Left ventricle myocardium superior (tissue), 1 donor: ENCODE measurements at regions of chr6 and their contacts with region 1.

Region 1: GRCh38 chr6:47097092-47097945 is 55.2 kb upstream of the ADGRF1 start:
- DNase-seq: peak; percentile 53
- ATAC-seq: peak; percentile 82

Region 2: DNA sequence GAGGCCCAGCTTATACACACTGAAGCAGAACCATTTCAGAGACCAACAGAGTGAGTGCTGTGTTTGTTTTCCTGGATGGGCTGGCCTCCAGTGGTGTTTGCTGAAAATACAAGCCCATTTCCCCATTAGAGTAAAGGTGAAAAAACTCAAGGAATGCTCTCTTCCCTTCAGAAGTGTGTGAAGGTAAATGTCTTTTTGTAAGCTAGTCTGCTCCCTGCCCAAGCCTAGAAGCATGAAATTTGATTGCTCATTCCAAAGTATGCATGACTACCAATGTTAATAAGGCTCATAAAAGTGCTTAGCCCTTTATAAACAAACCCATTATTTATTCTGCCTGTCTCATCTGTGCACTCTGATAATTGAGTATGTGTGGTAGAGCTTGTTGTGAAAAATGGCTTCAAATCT is 114.3 kb before region 1 on chr6:
- intact Hi-C with region 1: no loop called
- DNase-seq: no peak
- ATAC-seq: no peak

Region 3: GRCh38 chr6:47242483-47243386 is 145.4 kb after region 1 on chr6:
- intact Hi-C with region 1: loop called (anchors 10 kb)
- DNase-seq: peak; percentile 93
- ATAC-seq: peak; percentile 96

Region 4: DNA sequence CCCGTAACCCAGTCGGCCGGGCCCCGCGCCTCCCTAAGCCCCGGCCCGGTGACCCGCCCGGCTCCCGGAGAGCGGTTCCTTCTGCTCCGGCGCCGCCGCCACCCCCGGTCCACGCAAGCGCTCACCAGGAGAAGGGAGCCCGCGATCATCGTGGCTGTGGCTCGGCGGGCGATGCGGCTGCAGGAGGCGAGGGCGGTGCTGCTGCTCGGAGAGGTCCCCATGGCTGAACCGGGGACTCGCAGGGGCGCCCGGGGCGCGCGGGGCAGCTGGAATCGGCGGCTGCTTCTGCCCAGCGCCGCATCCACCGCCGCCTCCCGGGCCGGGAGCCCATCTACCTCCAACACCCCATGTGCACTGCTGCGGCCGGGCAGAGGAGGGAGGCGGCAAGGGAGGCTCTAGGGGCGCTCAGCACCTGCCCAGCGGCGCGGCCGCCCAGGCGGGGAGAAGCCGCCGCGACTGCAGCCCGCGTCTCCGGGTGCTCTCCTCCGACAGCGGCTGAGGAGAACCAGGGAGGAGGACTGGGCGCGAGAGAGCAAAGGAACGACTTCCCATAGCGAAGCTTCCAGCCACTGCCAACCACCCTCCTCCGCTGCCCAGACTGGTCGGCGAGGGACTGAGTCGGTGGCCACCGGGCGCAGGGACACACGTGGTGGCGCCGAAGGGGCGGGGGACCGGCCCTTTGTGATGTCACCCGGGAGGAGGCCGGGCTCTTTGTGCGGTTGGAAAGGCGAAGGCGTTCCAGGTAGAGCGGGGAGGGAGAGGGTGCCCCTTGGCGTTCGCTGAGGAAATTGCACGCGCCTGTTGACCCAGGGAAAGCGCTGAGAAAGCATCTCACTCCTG is 212.2 kb after region 1 on chr6 and contains the start of gene TNFRSF21:
- intact Hi-C with region 1: loop called (anchors 5 kb)
- DNase-seq: peak; percentile 93
- ATAC-seq: peak; percentile 99
- total RNA-seq, gene TNFRSF21: 9.3 TPM